ENCODE measurements at regions of chr11 and their contacts with region 1.

Region 1: GRCh38 chr11:128630367-128631230 is 43.2 kb upstream of the ETS1 start:
- DNase-seq: peak; percentile 82 to 88
- H3K4me3 ChIP-seq: no peak overlapping the region
- H3K4me3 Mint-ChIP-seq: no peak overlapping the region
- H3K27ac Mint-ChIP-seq: no peak overlapping the region
- H3K4me1 ChIP-seq: no peaks in the 10 kb centered on the region
- H3K4me1 Mint-ChIP-seq: no peaks in the 10 kb centered on the region
- H3K27me3 ChIP-seq: peaks cover 1% of the 10 kb centered on the region; the same call in 1 of the 2 replicates
- H3K27me3 Mint-ChIP-seq: peaks cover 10% of the 10 kb centered on the region
- CTCF ChIP-seq: peak; percentile 96 to 97

Region 2: DNA sequence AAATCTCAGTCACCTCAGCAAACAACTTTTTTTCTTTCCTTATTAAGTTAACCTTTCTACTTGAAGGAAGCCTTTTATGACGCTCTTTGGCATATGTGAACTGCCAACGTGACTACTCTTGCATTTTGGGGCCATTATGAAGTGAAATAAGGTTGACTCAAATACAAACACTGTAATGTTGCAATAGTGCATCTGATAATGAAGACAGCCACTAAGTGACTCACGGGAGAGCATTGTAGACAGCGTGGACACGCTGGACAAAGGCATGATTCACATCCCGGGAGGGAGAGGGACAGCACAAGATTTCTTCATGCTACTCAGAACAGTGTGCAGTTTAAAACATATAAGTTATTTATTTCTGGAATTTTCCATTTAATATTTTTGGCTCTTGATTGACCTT is 604.0 kb before region 1 on chr11:
- CTCF ChIA-PET with region 1: interaction called, 4 read pairs
- POLR2A ChIA-PET with region 1: no interaction called
- intact Hi-C with region 1: loop called (anchors 1 kb)
- DNase-seq: no peak
- H3K4me3 ChIP-seq: no peak overlapping the region
- H3K4me3 Mint-ChIP-seq: no peak overlapping the region
- H3K27ac Mint-ChIP-seq: no peak overlapping the region
- H3K4me1 ChIP-seq: no peaks in the 10 kb centered on the region
- H3K4me1 Mint-ChIP-seq: peaks cover 7% of the 10 kb centered on the region
- H3K27me3 ChIP-seq: no peaks in the 10 kb centered on the region; the same call in 1 of the 2 replicates
- H3K27me3 Mint-ChIP-seq: peaks cover 14% of the 10 kb centered on the region
- CTCF ChIP-seq: no peak

Region 3: GRCh38 chr11:128290106-128290840 is 340.3 kb before region 1 on chr11:
- CTCF ChIA-PET with region 1: interaction called, 7 read pairs
- POLR2A ChIA-PET with region 1: no interaction called
- intact Hi-C with region 1: loop called (anchors 1 kb)
- DNase-seq: peak in 1 of 2 experiments; percentile 78
- H3K4me3 ChIP-seq: no peak overlapping the region
- H3K4me3 Mint-ChIP-seq: no peak overlapping the region
- H3K27ac Mint-ChIP-seq: no peak overlapping the region
- H3K4me1 ChIP-seq: no peaks in the 10 kb centered on the region
- H3K4me1 Mint-ChIP-seq: no peaks in the 10 kb centered on the region
- H3K27me3 ChIP-seq: no peaks in the 10 kb centered on the region; the same call in 1 of the 2 replicates
- H3K27me3 Mint-ChIP-seq: peaks cover 14% of the 10 kb centered on the region
- CTCF ChIP-seq: peak; percentile 88 to 95

Region 4: GRCh38 chr11:128484172-128484571 is 146.4 kb before region 1 on chr11:
- CTCF ChIA-PET with region 1: interaction called, 7 read pairs
- POLR2A ChIA-PET with region 1: no interaction called
- intact Hi-C with region 1: loop called (anchors 1 kb)
- DNase-seq: peak in 1 of 2 experiments; percentile 33
- H3K4me3 ChIP-seq: no peak overlapping the region
- H3K4me3 Mint-ChIP-seq: no peak overlapping the region
- H3K27ac Mint-ChIP-seq: no peak overlapping the region
- H3K4me1 ChIP-seq: no peaks in the 10 kb centered on the region
- H3K4me1 Mint-ChIP-seq: no peaks in the 10 kb centered on the region
- H3K27me3 ChIP-seq: no peaks in the 10 kb centered on the region
- H3K27me3 Mint-ChIP-seq: peaks cover 9% of the 10 kb centered on the region
- CTCF ChIP-seq: peak in 1 of 2 experiments; percentile 53

Region 5: DNA sequence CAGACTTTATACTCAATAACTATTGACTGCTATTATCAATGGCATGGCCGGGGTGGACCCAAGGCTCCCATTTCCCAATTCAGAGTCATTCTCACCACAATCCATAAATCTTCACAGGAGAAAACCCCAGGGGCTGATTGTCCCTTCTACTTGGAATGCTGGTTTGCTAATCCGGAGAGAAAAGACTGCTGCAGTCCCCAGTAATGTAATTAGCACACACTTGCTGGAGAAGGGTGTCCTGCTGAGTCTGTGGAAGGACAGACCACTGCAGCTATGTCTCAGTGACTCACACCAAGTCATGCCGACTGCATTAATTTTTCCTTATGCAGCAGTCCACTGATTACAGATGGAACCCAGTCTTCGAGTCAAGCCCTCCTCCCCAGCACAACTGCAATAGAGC is 37.3 kb before region 1 on chr11:
- CTCF ChIA-PET with region 1: no interaction called
- POLR2A ChIA-PET with region 1: no interaction called
- intact Hi-C with region 1: no loop called
- DNase-seq: no peak
- H3K4me3 ChIP-seq: no peak overlapping the region
- H3K4me3 Mint-ChIP-seq: no peak overlapping the region
- H3K27ac Mint-ChIP-seq: no peak overlapping the region
- H3K4me1 ChIP-seq: no peaks in the 10 kb centered on the region
- H3K4me1 Mint-ChIP-seq: no peaks in the 10 kb centered on the region
- H3K27me3 ChIP-seq: peaks cover 2% of the 10 kb centered on the region
- H3K27me3 Mint-ChIP-seq: peaks cover 36% of the 10 kb centered on the region
- CTCF ChIP-seq: no peak

Region 6: DNA sequence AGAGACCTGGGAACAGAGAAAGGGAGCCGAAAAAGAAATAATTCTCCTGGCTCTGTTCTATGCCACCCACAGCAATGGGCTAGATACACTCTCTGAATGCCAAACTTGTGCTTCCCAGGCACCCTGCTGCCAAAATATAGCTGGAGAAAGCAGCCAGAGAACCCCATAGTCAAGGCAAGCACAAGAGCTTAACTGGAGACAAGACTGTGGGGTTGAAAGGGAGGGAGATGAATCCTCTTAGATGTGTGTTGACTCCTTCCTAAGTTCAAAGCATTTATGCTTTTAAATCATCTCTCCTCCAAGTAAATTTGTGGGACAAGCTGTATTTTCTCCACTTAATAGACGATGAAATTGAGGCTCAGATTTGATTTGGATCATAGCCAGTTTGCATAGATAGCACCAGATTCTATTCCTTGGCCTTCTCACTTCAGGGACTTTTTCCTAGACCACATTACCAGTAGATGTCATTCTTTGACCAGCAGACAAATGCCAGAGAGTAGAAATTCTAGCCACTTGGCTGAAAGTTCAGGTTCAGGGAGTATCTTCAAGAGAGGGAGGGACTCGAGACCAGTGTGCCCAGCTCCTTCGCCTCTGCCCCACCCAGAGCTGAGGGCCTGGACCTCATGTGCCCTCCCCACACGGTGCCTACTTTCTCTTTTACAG is 26.7 kb before region 1 on chr11:
- CTCF ChIA-PET with region 1: no interaction called
- POLR2A ChIA-PET with region 1: no interaction called
- intact Hi-C with region 1: loop called (anchors 2 kb)
- DNase-seq: no peak
- H3K4me3 ChIP-seq: no peak overlapping the region
- H3K4me3 Mint-ChIP-seq: no peak overlapping the region
- H3K27ac Mint-ChIP-seq: no peak overlapping the region
- H3K4me1 ChIP-seq: no peaks in the 10 kb centered on the region
- H3K4me1 Mint-ChIP-seq: no peaks in the 10 kb centered on the region
- H3K27me3 ChIP-seq: no peaks in the 10 kb centered on the region
- H3K27me3 Mint-ChIP-seq: peaks cover 30% of the 10 kb centered on the region
- CTCF ChIP-seq: no peak

Region 7: GRCh38 chr11:128709402-128709801 is 78.8 kb after region 1 on chr11:
- CTCF ChIA-PET with region 1: no interaction called
- POLR2A ChIA-PET with region 1: no interaction called
- intact Hi-C with region 1: no loop called
- DNase-seq: no peak
- H3K4me3 ChIP-seq: no peak overlapping the region
- H3K4me3 Mint-ChIP-seq: no peak overlapping the region
- H3K27ac Mint-ChIP-seq: no peak overlapping the region
- H3K4me1 ChIP-seq: peaks cover 9% of the 10 kb centered on the region
- H3K4me1 Mint-ChIP-seq: peaks cover 9% of the 10 kb centered on the region
- H3K27me3 ChIP-seq: no peaks in the 10 kb centered on the region
- H3K27me3 Mint-ChIP-seq: no peaks in the 10 kb centered on the region
- CTCF ChIP-seq: no peak

Region 8: GRCh38 chr11:128796270-128796669 is 165.7 kb after region 1 on chr11:
- CTCF ChIA-PET with region 1: no interaction called
- POLR2A ChIA-PET with region 1: no interaction called
- intact Hi-C with region 1: no loop called
- DNase-seq: no peak
- H3K4me3 ChIP-seq: no peak overlapping the region
- H3K4me3 Mint-ChIP-seq: no peak overlapping the region
- H3K27ac Mint-ChIP-seq: no peak overlapping the region
- H3K4me1 ChIP-seq: no peaks in the 10 kb centered on the region
- H3K4me1 Mint-ChIP-seq: no peaks in the 10 kb centered on the region
- H3K27me3 ChIP-seq: no peaks in the 10 kb centered on the region
- H3K27me3 Mint-ChIP-seq: peaks cover 24% of the 10 kb centered on the region
- CTCF ChIP-seq: no peak